Panc1 (cell line): ENCODE measurements at regions of chr12 and their contacts with region 1.

Region 1: GRCh38 chr12:51626115-51626514 is 35.1 kb downstream of the SCN8A start:
- DNase-seq: no peak
- ATAC-seq: no peak
- H3K4me3 ChIP-seq: no peak overlapping the region
- H3K27ac ChIP-seq: no peak overlapping the region
- H3K4me1 ChIP-seq: peaks cover 6% of the 10 kb centered on the region; the same call in 1 of the 2 replicates
- H3K27me3 ChIP-seq: no peaks in the 10 kb centered on the region
- CTCF ChIP-seq: no peak

Region 2: GRCh38 chr12:51351913-51352532 is 274.1 kb before region 1 on chr12:
- CTCF ChIA-PET with region 1: no interaction called
- POLR2A ChIA-PET with region 1: no interaction called
- in situ Hi-C with region 1: no loop called
- intact Hi-C with region 1: no loop called
- DNase-seq: no peak
- ATAC-seq: peak; percentile 75
- H3K4me3 ChIP-seq: no peak overlapping the region
- H3K27ac ChIP-seq: no peak overlapping the region
- H3K4me1 ChIP-seq: no peaks in the 10 kb centered on the region
- H3K27me3 ChIP-seq: no peaks in the 10 kb centered on the region
- CTCF ChIP-seq: peak; percentile 82; the same call in 1 of the 2 replicates

Region 3: DNA sequence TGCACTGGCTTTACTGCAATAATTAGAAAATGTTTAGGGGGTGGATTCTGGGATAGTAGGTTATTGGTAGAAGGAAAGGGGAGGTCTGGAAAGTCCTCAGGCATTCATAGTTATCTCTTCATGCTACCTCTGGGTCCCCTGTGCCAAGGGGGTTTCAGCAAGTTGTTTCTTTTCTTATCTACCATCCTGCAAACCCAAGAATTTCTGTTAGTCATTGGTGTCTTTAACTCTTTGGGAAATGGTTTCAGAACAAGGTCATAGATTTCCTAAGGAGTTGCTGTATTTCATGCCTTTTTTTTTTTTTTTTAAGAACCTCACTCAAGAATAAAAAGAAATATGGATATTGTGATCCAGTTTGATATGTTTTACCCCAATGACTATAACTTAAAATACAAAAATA is 137.8 kb before region 1 on chr12:
- CTCF ChIA-PET with region 1: no interaction called
- POLR2A ChIA-PET with region 1: no interaction called
- in situ Hi-C with region 1: no loop called
- intact Hi-C with region 1: no loop called
- DNase-seq: no peak
- ATAC-seq: no peak
- H3K4me3 ChIP-seq: no peak overlapping the region
- H3K27ac ChIP-seq: no peak overlapping the region
- H3K4me1 ChIP-seq: no peaks in the 10 kb centered on the region
- H3K27me3 ChIP-seq: no peaks in the 10 kb centered on the region
- CTCF ChIP-seq: no peak

Region 4: GRCh38 chr12:51601241-51601640 is 24.9 kb before region 1 on chr12:
- CTCF ChIA-PET with region 1: no interaction called
- POLR2A ChIA-PET with region 1: interaction called, 15 read pairs
- in situ Hi-C with region 1: no loop called
- intact Hi-C with region 1: no loop called
- DNase-seq: no peak
- ATAC-seq: no peak
- H3K4me3 ChIP-seq: no peak overlapping the region
- H3K27ac ChIP-seq: no peak overlapping the region
- H3K4me1 ChIP-seq: no peaks in the 10 kb centered on the region
- H3K27me3 ChIP-seq: no peaks in the 10 kb centered on the region
- CTCF ChIP-seq: no peak

Region 5: GRCh38 chr12:51647647-51648046 is 21.5 kb after region 1 on chr12:
- CTCF ChIA-PET with region 1: no interaction called
- POLR2A ChIA-PET with region 1: no interaction called
- in situ Hi-C with region 1: no loop called
- intact Hi-C with region 1: no loop called
- DNase-seq: no peak
- ATAC-seq: no peak
- H3K4me3 ChIP-seq: no peak overlapping the region
- H3K27ac ChIP-seq: no peak overlapping the region
- H3K4me1 ChIP-seq: no peaks in the 10 kb centered on the region
- H3K27me3 ChIP-seq: no peaks in the 10 kb centered on the region
- CTCF ChIP-seq: no peak